ENCODE measurements at regions of chr11 and their contacts with region 1.

Region 1: GRCh38 chr11:108647701-108648527 is 17.0 kb upstream of the DDX10 start:
- DNase-seq: peak; percentile 17 to 70 (median 62)
- ATAC-seq: peak; percentile 91
- H3K4me3 ChIP-seq: no peak overlapping the region
- H3K4me3 Mint-ChIP-seq: no peak overlapping the region
- H3K27ac ChIP-seq: no peak overlapping the region
- H3K27ac Mint-ChIP-seq: no peak overlapping the region
- H3K4me1 ChIP-seq: no peaks in the 10 kb centered on the region
- H3K4me1 Mint-ChIP-seq: no peaks in the 10 kb centered on the region
- H3K27me3 ChIP-seq: no peaks in the 10 kb centered on the region
- H3K27me3 Mint-ChIP-seq: peaks cover 0 to 9% (median 0%) of the 10 kb centered on the region in 5 donors

Region 2: GRCh38 chr11:107916671-107917241 is 731.2 kb before region 1 on chr11:
- CTCF ChIA-PET with region 1: interaction called, 3 read pairs
- POLR2A ChIA-PET with region 1: no interaction called
- intact Hi-C with region 1: loop called in 1 of 2 experiments (anchors 1 kb)
- DNase-seq: peak in 5 of 9 donors; percentile 10 to 38 (median 22)
- ATAC-seq: no peak
- H3K4me3 ChIP-seq: no peak overlapping the region
- H3K4me3 Mint-ChIP-seq: no peak overlapping the region
- H3K27ac ChIP-seq: no peak overlapping the region
- H3K27ac Mint-ChIP-seq: no peak overlapping the region
- H3K4me1 ChIP-seq: no peaks in the 10 kb centered on the region
- H3K4me1 Mint-ChIP-seq: peaks cover 0 to 6% (median 0%) of the 10 kb centered on the region in 7 donors
- H3K27me3 ChIP-seq: no peaks in the 10 kb centered on the region
- H3K27me3 Mint-ChIP-seq: peaks cover 0 to 27% (median 11%) of the 10 kb centered on the region in 5 donors

Region 3: GRCh38 chr11:108135845-108136544 is 511.9 kb before region 1 on chr11:
- CTCF ChIA-PET with region 1: no interaction called
- POLR2A ChIA-PET with region 1: no interaction called
- intact Hi-C with region 1: loop called in 1 of 2 experiments (anchors 1 kb)
- DNase-seq: peak in 6 of 9 donors; percentile 11 to 38 (median 29)
- ATAC-seq: peak; percentile 54
- H3K4me3 ChIP-seq: no peak overlapping the region
- H3K4me3 Mint-ChIP-seq: no peak overlapping the region
- H3K27ac ChIP-seq: no peak overlapping the region
- H3K27ac Mint-ChIP-seq: peak overlapping the region in 6 of 9 donors; percentile 16 to 72 (median 43)
- H3K4me1 ChIP-seq: no peaks in the 10 kb centered on the region
- H3K4me1 Mint-ChIP-seq: peaks cover 0 to 20% (median 11%) of the 10 kb centered on the region in 7 donors
- H3K27me3 ChIP-seq: no peaks in the 10 kb centered on the region
- H3K27me3 Mint-ChIP-seq: no peaks in the 10 kb centered on the region

Region 4: GRCh38 chr11:108340970-108341369 is 306.9 kb before region 1 on chr11:
- CTCF ChIA-PET with region 1: interaction called, 3 read pairs
- POLR2A ChIA-PET with region 1: no interaction called
- intact Hi-C with region 1: loop called (anchors 1 to 5 kb)
- DNase-seq: no peak
- ATAC-seq: no peak
- H3K4me3 ChIP-seq: no peak overlapping the region
- H3K4me3 Mint-ChIP-seq: no peak overlapping the region
- H3K27ac ChIP-seq: no peak overlapping the region
- H3K27ac Mint-ChIP-seq: peak overlapping the region in 5 of 9 donors; percentile 1 to 59 (median 22)
- H3K4me1 ChIP-seq: no peaks in the 10 kb centered on the region
- H3K4me1 Mint-ChIP-seq: peaks cover 9 to 48% (median 29%) of the 10 kb centered on the region in 7 donors
- H3K27me3 ChIP-seq: no peaks in the 10 kb centered on the region
- H3K27me3 Mint-ChIP-seq: no peaks in the 10 kb centered on the region

Region 5: DNA sequence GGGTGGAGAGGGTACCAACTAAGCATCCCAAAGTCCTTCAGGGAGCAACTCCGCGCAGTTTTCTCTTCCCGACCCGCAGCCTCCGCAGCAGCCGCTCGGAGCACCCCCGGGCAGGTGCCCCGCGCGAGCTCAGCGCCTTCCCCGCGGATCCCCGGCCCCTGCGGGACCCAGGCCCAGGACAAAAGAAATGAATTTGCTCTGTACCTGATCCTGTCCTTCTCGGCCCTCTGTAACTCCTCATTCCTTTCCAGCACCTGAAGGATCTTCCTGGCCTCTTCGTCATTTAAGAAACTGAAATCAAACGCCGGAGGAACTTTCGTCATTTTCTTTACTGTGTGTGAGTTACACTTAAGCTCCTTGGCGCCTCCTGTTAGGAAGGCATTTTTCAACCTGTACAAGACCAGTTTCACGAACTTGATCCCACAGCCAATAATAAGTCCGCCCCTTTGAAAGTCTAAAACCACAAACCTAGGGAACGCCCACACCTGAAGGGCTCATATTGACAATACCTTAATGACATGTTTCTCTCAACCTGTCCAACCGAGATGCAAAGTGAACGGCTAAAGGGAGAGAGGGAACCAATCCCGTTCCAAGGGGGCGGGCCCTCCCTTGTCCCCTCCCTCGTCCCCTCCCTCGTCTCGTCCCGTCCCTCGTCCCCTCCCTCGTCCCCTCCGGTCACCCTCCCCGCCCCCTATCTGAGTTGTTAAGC is 54.5 kb before region 1 on chr11 and contains the start of gene EXPH5:
- CTCF ChIA-PET with region 1: no interaction called
- POLR2A ChIA-PET with region 1: no interaction called
- intact Hi-C with region 1: loop called in 1 of 2 experiments (anchors 5 kb)
- DNase-seq: peak; percentile 62 to 89 (median 87)
- ATAC-seq: peak; percentile 97
- H3K4me3 ChIP-seq: peak within 1 kb of the TSS; percentile 75
- H3K4me3 Mint-ChIP-seq: peak within 1 kb of the TSS; percentile 90 to 100 (median 97)
- H3K27ac ChIP-seq: peak within 1 kb of the TSS; percentile 81
- H3K27ac Mint-ChIP-seq: peak within 1 kb of the TSS; percentile 79 to 98 (median 95)
- H3K4me1 ChIP-seq: peaks cover 0 to 13% of the 10 kb centered on the region in 2 donors
- H3K4me1 Mint-ChIP-seq: peaks cover 12 to 27% (median 22%) of the 10 kb centered on the region in 7 donors
- H3K27me3 ChIP-seq: no peaks in the 10 kb centered on the region
- H3K27me3 Mint-ChIP-seq: peaks cover 0 to 60% (median 0%) of the 10 kb centered on the region in 5 donors
- total RNA-seq, gene EXPH5: 1.9 to 8.3 (median 5.9) TPM